CD4-positive, alpha-beta memory T cell (primary cell): ENCODE measurements at regions of chr20 and their contacts with region 1.

Region 1: GRCh38 chr20:24934101-24934661 is 14.9 kb upstream of the CST7 start:
- DNase-seq: no peak
- H3K4me3 ChIP-seq: no peak overlapping the region
- H3K4me3 Mint-ChIP-seq: no peak overlapping the region
- H3K27ac ChIP-seq: no peak overlapping the region
- H3K27ac Mint-ChIP-seq: no peak overlapping the region
- H3K4me1 ChIP-seq: peaks cover 24% of the 10 kb centered on the region
- H3K4me1 Mint-ChIP-seq: peaks cover 20 to 35% (median 28%) of the 10 kb centered on the region in 4 donors
- H3K27me3 ChIP-seq: no peaks in the 10 kb centered on the region
- H3K27me3 Mint-ChIP-seq: no peaks in the 10 kb centered on the region

Region 2: DNA sequence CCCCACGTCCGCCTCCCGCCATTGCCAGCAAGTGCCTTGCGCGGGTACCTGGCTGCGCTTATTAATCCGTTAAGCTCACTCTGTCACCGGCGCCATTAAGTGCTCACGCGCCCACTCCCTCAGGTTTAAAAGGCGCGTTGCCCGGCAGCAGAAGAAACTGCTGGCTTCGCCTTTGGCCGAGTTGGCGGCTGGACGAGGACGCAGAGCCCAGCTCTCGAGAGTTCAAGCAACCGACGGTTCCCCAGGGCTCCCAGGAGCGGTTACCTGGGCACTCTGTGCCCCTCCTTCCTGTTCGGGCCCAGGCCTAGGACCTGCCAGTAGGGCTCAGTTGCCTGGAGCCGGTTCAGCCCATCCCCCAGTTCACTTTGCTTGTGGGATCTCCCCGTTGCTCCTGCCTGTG is 945.6 kb before region 1 on chr20 and contains the start of gene GGTLC1:
- CTCF ChIA-PET with region 1: no interaction called
- POLR2A ChIA-PET with region 1: no interaction called
- intact Hi-C with region 1: no loop called
- DNase-seq: no peak
- H3K4me3 ChIP-seq: no peak within 1 kb of the TSS
- H3K4me3 Mint-ChIP-seq: peak within 1 kb of the TSS in 1 of 8 donors; percentile 20
- H3K27ac ChIP-seq: no peak within 1 kb of the TSS
- H3K27ac Mint-ChIP-seq: no peak within 1 kb of the TSS
- H3K4me1 ChIP-seq: no peaks in the 10 kb centered on the region
- H3K4me1 Mint-ChIP-seq: no peaks in the 10 kb centered on the region
- H3K27me3 ChIP-seq: no peaks in the 10 kb centered on the region
- H3K27me3 Mint-ChIP-seq: no peaks in the 10 kb centered on the region
- total RNA-seq, gene GGTLC1: not detected

Region 3: GRCh38 chr20:24816907-24817306 is 117.3 kb before region 1 on chr20:
- CTCF ChIA-PET with region 1: no interaction called
- POLR2A ChIA-PET with region 1: no interaction called
- intact Hi-C with region 1: no loop called
- DNase-seq: no peak
- H3K4me3 ChIP-seq: no peak overlapping the region
- H3K4me3 Mint-ChIP-seq: no peak overlapping the region
- H3K27ac ChIP-seq: no peak overlapping the region
- H3K27ac Mint-ChIP-seq: no peak overlapping the region
- H3K4me1 ChIP-seq: no peaks in the 10 kb centered on the region
- H3K4me1 Mint-ChIP-seq: no peaks in the 10 kb centered on the region
- H3K27me3 ChIP-seq: no peaks in the 10 kb centered on the region
- H3K27me3 Mint-ChIP-seq: peaks cover 0 to 3% of the 10 kb centered on the region in 2 donors

Region 4: DNA sequence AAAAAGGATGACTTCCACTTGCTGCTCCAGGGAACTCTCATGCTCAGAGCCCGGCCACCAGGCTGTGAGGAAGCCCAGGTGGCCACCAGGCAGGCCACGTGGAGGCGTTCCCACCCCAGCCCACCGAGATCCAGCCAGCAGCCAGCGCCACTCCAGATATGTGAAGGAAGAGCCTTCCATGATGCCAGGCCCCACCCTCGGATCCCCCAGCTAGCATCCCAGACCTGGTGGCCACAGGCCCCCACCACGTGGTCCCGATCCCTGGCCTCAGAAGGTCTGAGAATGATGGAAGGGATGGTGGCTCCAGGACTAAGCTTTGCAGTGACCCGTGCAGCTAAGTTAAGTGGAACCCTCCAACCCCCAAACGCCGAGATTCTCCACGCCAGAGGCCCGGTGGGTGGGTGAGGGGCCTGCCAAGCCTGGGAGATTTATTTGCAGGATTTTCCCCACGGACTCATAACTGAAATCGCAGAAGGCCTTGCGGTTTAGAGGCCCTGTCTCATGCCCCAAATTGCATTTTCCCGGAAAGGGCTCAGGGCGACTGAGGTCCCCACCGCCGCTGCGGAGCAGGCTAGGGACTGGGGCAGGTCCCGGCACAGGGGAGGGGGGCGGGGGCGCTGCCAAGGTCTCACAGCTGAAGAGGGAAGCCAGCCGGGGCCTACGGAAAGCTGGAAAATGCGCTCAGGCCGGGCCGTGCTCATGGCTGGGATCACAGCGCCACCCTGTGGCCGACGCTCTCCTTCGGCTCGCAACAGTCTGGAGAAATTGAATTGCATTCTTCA is 16.2 kb before region 1 on chr20:
- CTCF ChIA-PET with region 1: interaction called, 21 read pairs
- POLR2A ChIA-PET with region 1: no interaction called
- intact Hi-C with region 1: no loop called
- DNase-seq: peak in 4 of 5 donors; percentile 29 to 41 (median 32)
- H3K4me3 ChIP-seq: no peak overlapping the region
- H3K4me3 Mint-ChIP-seq: peak overlapping the region in 4 of 8 donors; percentile 21 to 56 (median 46)
- H3K27ac ChIP-seq: no peak overlapping the region
- H3K27ac Mint-ChIP-seq: peak overlapping the region in 1 of 7 donors; percentile 73
- H3K4me1 ChIP-seq: peaks cover 7% of the 10 kb centered on the region
- H3K4me1 Mint-ChIP-seq: peaks cover 2 to 11% (median 6%) of the 10 kb centered on the region in 4 donors
- H3K27me3 ChIP-seq: no peaks in the 10 kb centered on the region
- H3K27me3 Mint-ChIP-seq: peaks cover 1 to 8% of the 10 kb centered on the region in 2 donors

Region 5: GRCh38 chr20:24948939-24949679 is 14.9 kb after region 1 on chr20 and contains the start of gene CST7:
- CTCF ChIA-PET with region 1: interaction called, 31 read pairs
- POLR2A ChIA-PET with region 1: interaction called, 15 read pairs
- intact Hi-C with region 1: loop called (anchors 2 kb)
- DNase-seq: peak; percentile 85 to 94 (median 87)
- H3K4me3 ChIP-seq: peak within 1 kb of the TSS in 1 of 2 donors; percentile 41
- H3K4me3 Mint-ChIP-seq: peak within 1 kb of the TSS; percentile 65 to 91 (median 84)
- H3K27ac ChIP-seq: peak within 1 kb of the TSS; percentile 65
- H3K27ac Mint-ChIP-seq: peak within 1 kb of the TSS; percentile 81 to 99 (median 96)
- H3K4me1 ChIP-seq: peaks cover 36% of the 10 kb centered on the region
- H3K4me1 Mint-ChIP-seq: peaks cover 32 to 80% (median 57%) of the 10 kb centered on the region in 4 donors
- H3K27me3 ChIP-seq: no peaks in the 10 kb centered on the region
- H3K27me3 Mint-ChIP-seq: no peaks in the 10 kb centered on the region
- total RNA-seq, gene CST7: 23.2 to 23.3 TPM

Region 6: GRCh38 chr20:24960302-24960801 is 26.2 kb after region 1 on chr20:
- CTCF ChIA-PET with region 1: interaction called, 20 read pairs
- POLR2A ChIA-PET with region 1: interaction called, 8 read pairs
- intact Hi-C with region 1: no loop called
- DNase-seq: no peak
- H3K4me3 ChIP-seq: no peak overlapping the region
- H3K4me3 Mint-ChIP-seq: peak overlapping the region in 2 of 8 donors; percentile 3 to 67
- H3K27ac ChIP-seq: peak overlapping the region; percentile 66
- H3K27ac Mint-ChIP-seq: peak overlapping the region; percentile 87 to 96 (median 91)
- H3K4me1 ChIP-seq: peaks cover 34% of the 10 kb centered on the region
- H3K4me1 Mint-ChIP-seq: peaks cover 11 to 44% (median 23%) of the 10 kb centered on the region in 4 donors
- H3K27me3 ChIP-seq: no peaks in the 10 kb centered on the region
- H3K27me3 Mint-ChIP-seq: no peaks in the 10 kb centered on the region

Region 7: GRCh38 chr20:25065625-25066338 is 131.6 kb after region 1 on chr20:
- CTCF ChIA-PET with region 1: interaction called, 29 read pairs
- POLR2A ChIA-PET with region 1: no interaction called
- intact Hi-C with region 1: no loop called
- DNase-seq: peak; percentile 66 to 70 (median 67)
- H3K4me3 ChIP-seq: no peak overlapping the region
- H3K4me3 Mint-ChIP-seq: no peak overlapping the region
- H3K27ac ChIP-seq: no peak overlapping the region
- H3K27ac Mint-ChIP-seq: peak overlapping the region in 2 of 7 donors; percentile 4 to 26
- H3K4me1 ChIP-seq: no peaks in the 10 kb centered on the region
- H3K4me1 Mint-ChIP-seq: peaks cover 4 to 8% (median 5%) of the 10 kb centered on the region in 4 donors
- H3K27me3 ChIP-seq: peaks cover 7% of the 10 kb centered on the region
- H3K27me3 Mint-ChIP-seq: peaks cover 16 to 18% of the 10 kb centered on the region in 2 donors